OCI-LY7 (cell line): ENCODE measurements at regions of chr2 and their contacts with region 1.

Region 1: DNA sequence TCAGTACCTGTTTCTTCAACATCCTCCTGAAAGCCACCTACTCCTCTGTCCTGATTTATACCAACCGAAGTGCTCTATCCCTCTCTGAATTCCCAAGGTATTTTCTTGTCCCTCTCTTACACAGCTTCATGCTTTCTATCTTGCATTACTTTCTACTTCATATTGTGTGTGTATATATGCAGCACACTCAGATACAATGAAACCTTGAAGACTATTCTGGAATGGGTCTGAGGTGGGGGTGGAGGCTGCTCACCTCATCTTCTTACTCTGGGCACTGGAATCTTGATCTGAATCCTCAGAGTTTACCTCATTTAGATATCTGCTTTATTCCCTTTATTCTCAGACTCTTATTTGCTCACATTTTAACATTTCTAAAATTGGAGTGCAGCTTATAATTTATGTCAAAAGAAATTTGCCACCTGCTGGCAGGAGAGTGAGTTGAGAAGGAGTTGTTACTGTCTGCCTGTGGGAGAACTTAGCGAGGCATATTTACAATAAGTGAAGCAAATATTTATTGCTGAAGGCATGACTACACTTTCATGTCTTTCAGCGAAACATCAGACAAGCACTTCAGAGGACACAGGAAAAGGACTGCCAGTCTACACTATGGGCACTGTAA is 16.6 kb upstream of the KIAA2012 start:
- DNase-seq: peak; percentile 7
- H3K4me3 ChIP-seq: no peak overlapping the region
- H3K27ac ChIP-seq: no peak overlapping the region
- H3K4me1 ChIP-seq: no peaks in the 10 kb centered on the region
- CTCF ChIP-seq: peak; percentile 63

Region 2: DNA sequence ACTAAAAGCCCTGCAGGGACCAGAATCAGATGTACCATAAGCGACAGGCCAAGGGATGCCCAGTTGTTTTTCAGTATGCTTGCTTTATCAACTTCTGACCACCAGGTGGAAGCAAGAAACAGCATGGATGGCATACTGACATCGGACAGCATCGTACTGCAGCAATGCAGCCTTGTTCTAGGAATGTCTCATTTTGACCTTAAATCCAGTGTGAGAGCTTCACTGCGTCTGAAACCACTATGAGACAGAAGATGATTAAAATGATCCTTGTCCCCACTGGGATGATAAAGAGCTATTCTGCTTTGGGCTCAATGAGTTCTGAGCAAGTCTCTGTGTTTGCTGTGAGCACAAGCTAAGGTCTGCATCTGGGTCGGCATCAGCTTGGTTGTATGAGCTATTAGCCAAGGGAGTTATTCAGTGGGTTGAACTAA is 195.8 kb before region 1 on chr2:
- CTCF ChIA-PET with region 1: no interaction called
- POLR2A ChIA-PET with region 1: interaction called, 4 read pairs
- intact Hi-C with region 1: loop called (anchors 2 kb)
- DNase-seq: peak; percentile 64
- H3K4me3 ChIP-seq: no peak overlapping the region
- H3K27ac ChIP-seq: no peak overlapping the region
- H3K4me1 ChIP-seq: no peaks in the 10 kb centered on the region
- CTCF ChIP-seq: peak; percentile 87

Region 3: DNA sequence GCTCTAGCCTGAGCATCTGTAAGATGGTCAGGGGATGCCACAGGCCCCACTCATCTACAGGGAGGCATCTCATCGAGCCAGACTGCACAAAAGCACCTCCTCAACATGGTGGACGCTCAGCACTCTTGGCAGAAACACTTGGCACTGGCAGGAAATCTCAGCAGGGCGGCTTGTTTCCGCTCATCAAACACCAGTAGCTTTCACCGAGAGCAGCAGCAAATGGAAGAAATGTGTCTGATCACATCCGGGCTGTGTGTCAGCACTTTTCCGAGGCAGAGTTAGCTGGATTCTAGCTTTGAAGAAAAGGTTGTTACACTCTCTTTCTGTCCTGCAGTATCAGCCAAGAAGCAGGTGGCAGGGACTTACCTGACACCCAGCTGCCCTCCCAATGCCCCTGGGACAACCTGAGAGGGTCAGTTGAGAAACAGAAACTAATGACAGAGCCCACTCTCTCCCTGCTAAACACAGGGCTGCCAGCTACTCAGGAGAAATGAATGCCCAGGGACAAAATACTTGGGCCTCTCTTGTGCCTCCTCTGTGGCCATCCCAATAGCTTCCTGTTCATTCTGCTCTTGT is 91.8 kb before region 1 on chr2:
- CTCF ChIA-PET with region 1: no interaction called
- POLR2A ChIA-PET with region 1: no interaction called
- intact Hi-C with region 1: loop called (anchors 10 kb)
- DNase-seq: no peak
- H3K4me3 ChIP-seq: no peak overlapping the region
- H3K27ac ChIP-seq: no peak overlapping the region
- H3K4me1 ChIP-seq: no peaks in the 10 kb centered on the region
- CTCF ChIP-seq: no peak